ENCODE measurements at regions of chr6 and their contacts with region 1.

Region 1: DNA sequence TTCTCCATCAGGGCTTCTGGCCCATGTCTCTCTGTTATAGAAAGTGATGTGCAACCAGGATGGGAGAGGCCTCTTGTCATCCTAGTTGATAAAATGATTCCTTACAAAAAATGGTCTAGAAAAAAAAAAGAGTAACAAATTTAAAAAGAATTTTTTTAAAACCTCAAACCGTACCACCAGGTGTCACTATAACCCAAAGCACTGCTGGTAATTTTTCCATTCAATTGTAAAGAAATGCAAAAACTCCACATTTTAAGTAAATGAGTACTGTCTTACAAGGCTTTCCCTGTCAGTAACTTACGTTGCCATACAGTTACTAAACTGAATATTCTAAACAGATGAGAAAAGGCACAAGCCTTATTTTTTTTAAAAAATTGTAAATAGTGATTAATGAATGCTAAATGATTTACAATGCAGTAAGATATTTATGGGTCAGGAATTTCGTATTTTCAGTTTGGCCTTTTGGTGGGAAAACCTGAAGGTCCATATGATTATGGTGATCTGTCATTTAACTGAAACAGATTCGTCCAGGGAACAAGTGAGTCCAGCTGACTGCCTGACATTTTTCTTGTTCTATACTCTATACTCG is 95.4 kb downstream of the OGFRL1 start:
- DNase-seq: no peak
- ATAC-seq: no peak
- H3K4me3 Mint-ChIP-seq: no peak overlapping the region
- H3K27ac Mint-ChIP-seq: peak overlapping the region; percentile 2; the same call in 1 of the 2 replicates
- H3K4me1 Mint-ChIP-seq: peaks cover 28% of the 10 kb centered on the region
- H3K27me3 Mint-ChIP-seq: no peaks in the 10 kb centered on the region
- CTCF ChIP-seq: peak; percentile 52; the same call in 1 of the 2 replicates

Region 2: GRCh38 chr6:71454056-71454455 is 70.1 kb after region 1 on chr6:
- CTCF ChIA-PET with region 1: no interaction called
- POLR2A ChIA-PET with region 1: no interaction called
- DNase-seq: no peak
- ATAC-seq: no peak
- H3K4me3 Mint-ChIP-seq: no peak overlapping the region
- H3K27ac Mint-ChIP-seq: no peak overlapping the region
- H3K4me1 Mint-ChIP-seq: peaks cover 12% of the 10 kb centered on the region
- H3K27me3 Mint-ChIP-seq: no peaks in the 10 kb centered on the region
- CTCF ChIP-seq: no peak

Region 3: DNA sequence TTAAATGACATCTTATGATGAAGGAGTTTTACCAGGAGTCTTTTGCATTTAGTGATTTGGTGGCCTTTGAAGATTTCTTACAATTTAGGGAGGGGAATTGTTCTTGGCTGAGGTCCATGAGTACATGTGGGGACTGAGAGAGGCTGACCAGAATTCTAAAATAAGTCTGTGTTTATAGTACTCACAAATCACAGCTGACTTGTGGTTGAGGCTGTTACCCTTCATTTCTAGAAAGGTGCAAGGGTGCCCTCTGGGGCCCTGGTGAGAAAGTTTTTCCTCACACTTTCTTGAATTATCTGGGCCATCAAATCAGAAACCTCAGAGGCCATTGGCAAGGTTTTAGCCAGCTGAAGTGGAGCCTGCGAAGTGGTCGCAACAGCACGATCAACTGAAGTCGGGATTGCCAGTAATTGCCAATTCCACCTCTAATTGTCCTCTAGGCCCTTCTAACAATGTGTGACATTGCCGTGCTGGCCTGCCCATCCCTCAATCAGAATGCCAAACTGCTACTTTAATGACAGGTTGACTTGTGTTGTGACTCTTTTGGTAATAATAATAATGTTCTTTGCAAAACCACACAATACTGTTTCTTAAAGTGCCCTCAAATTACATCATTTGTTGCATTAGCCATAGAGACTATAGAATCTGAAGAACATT is 126.2 kb after region 1 on chr6:
- CTCF ChIA-PET with region 1: interaction called, 26 read pairs
- POLR2A ChIA-PET with region 1: no interaction called
- DNase-seq: peak; percentile 51
- ATAC-seq: peak; percentile 87
- H3K4me3 Mint-ChIP-seq: no peak overlapping the region
- H3K27ac Mint-ChIP-seq: no peak overlapping the region
- H3K4me1 Mint-ChIP-seq: peaks cover 4% of the 10 kb centered on the region; the same call in 1 of the 2 replicates
- H3K27me3 Mint-ChIP-seq: no peaks in the 10 kb centered on the region
- CTCF ChIP-seq: no peak